Panc1 (cell line): ENCODE measurements at regions of chr4 and their contacts with region 1.

Region 1: GRCh38 chr4:9704551-9705332 is 76.7 kb upstream of the DRD5 start:
- DNase-seq: no peak
- ATAC-seq: no peak
- H3K4me3 ChIP-seq: no peak overlapping the region
- H3K27ac ChIP-seq: no peak overlapping the region
- H3K4me1 ChIP-seq: no peaks in the 10 kb centered on the region
- H3K27me3 ChIP-seq: no peaks in the 10 kb centered on the region
- CTCF ChIP-seq: no peak

Region 2: DNA sequence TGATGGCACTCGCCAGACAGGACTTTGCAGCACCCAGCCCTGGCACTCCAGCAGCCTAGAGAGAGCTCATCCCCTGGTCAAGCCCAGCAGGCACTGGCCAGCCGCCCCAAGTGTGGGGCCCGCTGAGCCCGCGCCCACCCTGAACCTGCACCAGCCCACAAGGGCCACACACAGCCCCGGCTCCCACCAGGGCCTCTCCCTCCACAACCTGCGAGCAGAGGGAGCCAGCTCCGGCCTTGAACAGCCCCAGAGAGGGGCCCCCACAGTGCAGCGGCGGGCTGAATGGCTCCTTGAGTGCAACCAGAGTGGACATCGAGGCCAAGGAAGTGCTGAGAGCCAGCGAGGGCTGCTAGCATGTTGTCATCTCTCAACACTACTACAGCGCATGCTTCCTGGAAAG is 294.9 kb before region 1 on chr4:
- CTCF ChIA-PET with region 1: no interaction called
- POLR2A ChIA-PET with region 1: no interaction called
- in situ Hi-C with region 1: no loop called
- intact Hi-C with region 1: no loop called
- DNase-seq: no peak
- ATAC-seq: no peak
- H3K4me3 ChIP-seq: no peak overlapping the region
- H3K27ac ChIP-seq: no peak overlapping the region
- H3K4me1 ChIP-seq: no peaks in the 10 kb centered on the region
- H3K27me3 ChIP-seq: no peaks in the 10 kb centered on the region
- CTCF ChIP-seq: no peak

Region 3: GRCh38 chr4:9735515-9735914 is 30.8 kb after region 1 on chr4:
- CTCF ChIA-PET with region 1: no interaction called
- POLR2A ChIA-PET with region 1: no interaction called
- in situ Hi-C with region 1: no loop called
- intact Hi-C with region 1: no loop called
- DNase-seq: no peak
- ATAC-seq: no peak
- H3K4me3 ChIP-seq: no peak overlapping the region
- H3K27ac ChIP-seq: no peak overlapping the region
- H3K4me1 ChIP-seq: no peaks in the 10 kb centered on the region
- H3K27me3 ChIP-seq: no peaks in the 10 kb centered on the region
- CTCF ChIP-seq: no peak

Region 4: GRCh38 chr4:9762823-9763475 is 58.2 kb after region 1 on chr4:
- CTCF ChIA-PET with region 1: no interaction called
- POLR2A ChIA-PET with region 1: no interaction called
- in situ Hi-C with region 1: no loop called
- intact Hi-C with region 1: loop called (anchors 10 kb)
- DNase-seq: peak; percentile 45
- ATAC-seq: no peak
- H3K4me3 ChIP-seq: no peak overlapping the region
- H3K27ac ChIP-seq: no peak overlapping the region
- H3K4me1 ChIP-seq: no peaks in the 10 kb centered on the region
- H3K27me3 ChIP-seq: no peaks in the 10 kb centered on the region
- CTCF ChIP-seq: peak; percentile 67

Region 5: GRCh38 chr4:10013722-10014121 is 309.0 kb after region 1 on chr4:
- CTCF ChIA-PET with region 1: interaction called, 11 read pairs
- POLR2A ChIA-PET with region 1: no interaction called
- in situ Hi-C with region 1: no loop called
- intact Hi-C with region 1: loop called (anchors 5 kb)
- DNase-seq: no peak
- ATAC-seq: peak; percentile 90
- H3K4me3 ChIP-seq: no peak overlapping the region
- H3K27ac ChIP-seq: peak overlapping the region; percentile 76
- H3K4me1 ChIP-seq: peaks cover 32% of the 10 kb centered on the region
- H3K27me3 ChIP-seq: no peaks in the 10 kb centered on the region
- CTCF ChIP-seq: peak; percentile 70

Region 6: GRCh38 chr4:10018818-10019461 is 314.2 kb after region 1 on chr4:
- CTCF ChIA-PET with region 1: interaction called, 11 read pairs
- POLR2A ChIA-PET with region 1: no interaction called
- in situ Hi-C with region 1: no loop called
- intact Hi-C with region 1: loop called (anchors 5 kb)
- DNase-seq: peak; percentile 57
- ATAC-seq: peak; percentile 97
- H3K4me3 ChIP-seq: peak overlapping the region; percentile 46 to 68
- H3K27ac ChIP-seq: peak overlapping the region; percentile 80
- H3K4me1 ChIP-seq: peaks cover 8% of the 10 kb centered on the region
- H3K27me3 ChIP-seq: no peaks in the 10 kb centered on the region
- CTCF ChIP-seq: peak; percentile 96